Psoas muscle (tissue), 8 donors: ENCODE measurements at regions of chr3 and their contacts with region 1.

Region 1: GRCh38 chr3:100334488-100335351 is at the start of gene NIT2:
- DNase-seq: peak; percentile 88 to 95
- ATAC-seq: peak; percentile 94 to 96 (median 96)
- H3K4me3 ChIP-seq: peak within 1 kb of the TSS; percentile 83
- H3K27ac ChIP-seq: peak within 1 kb of the TSS; percentile 92
- H3K4me1 ChIP-seq: peaks cover 8% of the 10 kb centered on the region
- H3K27me3 ChIP-seq: no peaks in the 10 kb centered on the region
- CTCF ChIP-seq: no peak
- total RNA-seq, gene NIT2: 36.8 to 60.7 (median 44.3) TPM

Region 2: DNA sequence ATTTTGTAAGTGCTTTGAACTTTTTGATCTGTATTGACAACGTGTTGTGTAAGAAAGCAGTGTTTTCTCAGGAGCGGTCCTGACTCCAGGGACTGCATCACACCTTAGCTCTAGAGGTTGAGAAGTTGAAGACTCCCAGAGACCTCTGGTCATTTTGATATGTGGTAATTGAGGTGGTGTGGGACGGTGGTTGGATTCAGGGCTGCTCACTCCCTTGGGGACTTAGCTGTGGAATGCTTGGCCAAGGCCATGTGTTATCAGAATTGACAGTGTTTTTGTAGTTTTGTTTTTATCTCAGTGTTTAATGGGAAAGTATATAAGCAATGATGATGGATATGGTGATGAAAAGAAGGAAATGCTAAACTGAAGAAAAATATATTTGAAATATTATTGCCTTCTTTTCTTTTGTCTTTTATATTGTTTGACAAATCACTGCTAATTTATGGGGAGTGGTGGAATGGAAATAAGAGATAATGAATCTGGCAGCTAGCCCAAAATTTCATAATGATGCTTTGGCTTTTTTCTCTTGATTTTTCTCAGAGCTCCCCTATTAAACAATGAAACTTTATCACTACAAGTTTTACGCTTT is 501.0 kb before region 1 on chr3:
- intact Hi-C with region 1: loop called in 1 of 2 experiments (anchors 10 kb)
- DNase-seq: no peak
- ATAC-seq: no peak
- H3K4me3 ChIP-seq: no peak overlapping the region
- H3K27ac ChIP-seq: peak overlapping the region; percentile 50
- H3K4me1 ChIP-seq: peaks cover 10% of the 10 kb centered on the region
- H3K27me3 ChIP-seq: no peaks in the 10 kb centered on the region
- CTCF ChIP-seq: no peak

Region 3: DNA sequence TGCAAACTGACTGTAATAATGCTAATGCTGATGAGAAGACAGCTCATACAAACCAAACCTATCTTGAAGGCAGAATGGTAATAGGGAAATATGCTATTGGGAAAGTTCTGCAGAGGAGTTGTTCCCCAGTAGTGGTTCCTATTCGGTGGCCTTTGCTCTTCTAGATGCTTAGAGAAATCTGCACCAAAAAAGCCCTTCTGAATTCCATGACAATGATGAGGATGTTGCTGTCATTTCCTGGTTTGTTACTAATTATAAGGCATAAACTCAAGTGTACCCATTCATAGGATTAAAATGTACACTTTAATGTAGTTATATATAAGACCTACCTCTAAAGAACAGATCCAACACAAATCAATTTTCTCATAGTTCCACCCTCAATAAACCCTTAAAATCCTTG is 36.0 kb after region 1 on chr3:
- intact Hi-C with region 1: loop called in 1 of 2 experiments (anchors 5 kb)
- DNase-seq: no peak
- ATAC-seq: no peak
- H3K4me3 ChIP-seq: no peak overlapping the region
- H3K27ac ChIP-seq: no peak overlapping the region
- H3K4me1 ChIP-seq: no peaks in the 10 kb centered on the region
- H3K27me3 ChIP-seq: no peaks in the 10 kb centered on the region
- CTCF ChIP-seq: no peak

Region 4: DNA sequence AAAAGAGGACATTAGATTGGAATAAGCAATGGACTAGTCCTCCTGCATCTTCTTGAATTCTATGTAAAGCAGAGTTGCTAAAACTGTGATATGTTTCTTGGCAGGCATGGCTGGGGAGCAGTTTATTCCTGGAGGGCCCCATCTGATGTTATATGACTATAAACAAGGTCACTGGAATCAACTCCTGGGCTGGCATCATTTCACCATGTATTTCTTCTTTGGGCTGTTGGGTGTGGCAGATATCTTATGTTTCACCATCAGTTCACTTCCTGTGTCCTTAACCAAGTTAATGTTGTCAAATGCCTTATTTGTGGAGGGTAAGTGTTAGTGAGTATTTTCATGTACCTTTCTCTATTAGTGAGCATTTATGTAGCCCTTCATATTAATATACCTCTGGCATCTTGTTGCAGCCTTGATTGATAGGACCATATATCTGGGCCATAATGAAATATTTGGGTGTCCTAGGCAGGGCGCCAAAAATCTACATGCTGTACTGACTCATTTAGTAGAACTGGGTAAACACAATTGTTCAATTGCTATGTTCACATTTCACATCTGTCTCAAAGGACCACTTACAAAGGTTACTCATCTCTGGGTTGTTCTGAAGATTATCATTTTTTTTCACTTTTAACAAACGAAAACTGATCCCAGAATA is 222.1 kb after region 1 on chr3:
- intact Hi-C with region 1: no loop called
- DNase-seq: no peak
- ATAC-seq: no peak
- H3K4me3 ChIP-seq: no peak overlapping the region
- H3K27ac ChIP-seq: no peak overlapping the region
- H3K4me1 ChIP-seq: no peaks in the 10 kb centered on the region
- H3K27me3 ChIP-seq: no peaks in the 10 kb centered on the region
- CTCF ChIP-seq: no peak

Region 5: GRCh38 chr3:101036213-101036618 is 701.5 kb after region 1 on chr3:
- intact Hi-C with region 1: no loop called
- DNase-seq: peak in 1 of 2 donors; percentile 21
- ATAC-seq: peak in 3 of 4 donors; percentile 32 to 71 (median 53)
- H3K4me3 ChIP-seq: no peak overlapping the region
- H3K27ac ChIP-seq: no peak overlapping the region
- H3K4me1 ChIP-seq: no peaks in the 10 kb centered on the region
- H3K27me3 ChIP-seq: no peaks in the 10 kb centered on the region
- CTCF ChIP-seq: no peak